ENCODE measurements at regions of chr12 and their contacts with region 1.

Region 1: GRCh38 chr12:6851921-6852650 is at the start of gene USP5:
- DNase-seq: peak; percentile 94

Region 2: GRCh38 chr12:6723607-6724396 is 128.3 kb before region 1 on chr12 and contains the start of gene COPS7A:
- CTCF ChIA-PET with region 1: no interaction called
- POLR2A ChIA-PET with region 1: interaction called, 34 read pairs
- DNase-seq: peak; percentile 95

Region 3: GRCh38 chr12:6825398-6826124 is 26.5 kb before region 1 on chr12:
- CTCF ChIA-PET with region 1: interaction called, 4 read pairs
- POLR2A ChIA-PET with region 1: interaction called, 49 read pairs
- DNase-seq: peak; percentile 85

Region 4: DNA sequence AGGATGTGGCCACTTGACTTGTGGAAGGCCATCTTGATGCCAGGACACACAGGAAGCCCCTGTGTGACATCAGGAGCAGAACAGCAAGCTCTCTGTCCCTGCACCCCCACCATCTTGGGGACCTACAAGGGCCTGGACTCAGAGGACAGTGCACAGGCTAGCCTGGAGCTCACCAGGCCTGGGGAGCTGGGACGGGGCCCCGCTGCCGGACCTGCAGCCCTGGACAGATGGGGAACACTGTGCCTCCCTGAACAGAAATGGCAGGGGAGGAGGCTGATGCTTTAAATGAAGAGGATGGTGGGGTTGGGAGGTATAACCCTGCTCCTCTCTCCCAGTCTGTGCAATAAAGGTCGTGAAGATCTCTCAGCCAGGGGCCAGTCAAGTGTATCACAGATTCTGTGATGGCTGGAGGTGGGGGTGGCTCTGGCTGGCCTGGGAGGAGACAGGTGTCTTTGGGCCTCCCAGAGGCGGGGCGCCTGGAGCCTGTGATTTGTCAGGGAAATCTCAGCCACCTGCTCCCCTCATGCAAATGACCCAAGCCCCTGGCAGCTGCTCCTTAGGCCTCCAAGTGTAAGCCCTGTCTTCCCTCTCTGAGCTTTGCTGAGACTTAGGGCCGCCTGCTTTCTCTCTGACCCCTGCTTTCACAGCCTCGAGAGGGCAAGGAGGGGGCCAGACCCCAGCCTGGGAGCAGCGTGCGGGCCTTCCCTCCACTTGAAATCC is 12.4 kb before region 1 on chr12:
- CTCF ChIA-PET with region 1: interaction called, 14 read pairs
- POLR2A ChIA-PET with region 1: interaction called, 57 read pairs
- DNase-seq: no peak

Region 5: DNA sequence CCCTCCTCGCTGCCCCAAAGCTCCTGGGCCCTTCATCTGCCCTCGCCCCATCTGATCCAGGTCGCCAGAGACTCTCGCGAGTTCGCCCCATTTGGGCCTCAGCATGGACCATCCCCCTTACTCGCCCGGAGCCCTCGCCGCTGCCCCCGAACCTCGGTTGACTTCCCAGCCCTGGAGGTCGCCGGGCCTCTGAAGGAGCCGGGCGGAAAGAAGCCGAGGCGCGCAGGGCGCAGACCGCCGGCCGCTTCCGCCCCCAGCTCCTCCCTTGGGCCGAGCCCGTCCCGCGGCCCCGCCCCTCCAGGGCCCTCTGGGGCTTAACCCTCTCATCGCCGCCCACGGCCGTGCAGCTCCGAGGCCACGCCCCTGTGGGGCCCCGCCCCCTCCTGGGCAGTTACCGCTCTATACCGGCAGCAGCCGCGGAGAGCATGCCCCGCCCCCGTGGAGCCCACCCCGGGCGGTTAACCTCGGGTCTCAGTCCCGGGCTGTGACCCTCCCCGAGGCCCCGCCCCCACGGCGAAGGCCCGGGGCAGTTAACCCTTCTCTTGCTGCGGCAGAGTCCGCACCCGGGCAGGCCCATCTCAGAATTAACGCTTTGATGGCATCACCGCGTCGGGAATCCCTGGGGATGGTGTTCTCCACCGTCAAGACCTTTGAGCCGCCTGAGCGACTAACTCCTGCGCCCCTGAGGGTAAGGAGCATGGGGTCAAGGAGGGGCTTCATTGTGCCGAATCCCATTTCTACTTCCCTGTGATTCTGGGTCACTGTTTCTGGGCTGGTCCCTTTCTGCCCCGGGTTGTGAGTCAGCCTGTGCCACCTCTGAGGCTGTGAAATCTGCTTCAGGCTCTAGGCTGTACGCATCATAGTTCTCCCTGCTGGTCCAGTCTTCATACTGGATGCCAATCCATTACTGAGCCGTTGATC is 21.3 kb after region 1 on chr12 and contains the start of gene SPSB2:
- CTCF ChIA-PET with region 1: interaction called, 28 read pairs
- POLR2A ChIA-PET with region 1: interaction called, 214 read pairs
- DNase-seq: peak; percentile 96

Region 6: DNA sequence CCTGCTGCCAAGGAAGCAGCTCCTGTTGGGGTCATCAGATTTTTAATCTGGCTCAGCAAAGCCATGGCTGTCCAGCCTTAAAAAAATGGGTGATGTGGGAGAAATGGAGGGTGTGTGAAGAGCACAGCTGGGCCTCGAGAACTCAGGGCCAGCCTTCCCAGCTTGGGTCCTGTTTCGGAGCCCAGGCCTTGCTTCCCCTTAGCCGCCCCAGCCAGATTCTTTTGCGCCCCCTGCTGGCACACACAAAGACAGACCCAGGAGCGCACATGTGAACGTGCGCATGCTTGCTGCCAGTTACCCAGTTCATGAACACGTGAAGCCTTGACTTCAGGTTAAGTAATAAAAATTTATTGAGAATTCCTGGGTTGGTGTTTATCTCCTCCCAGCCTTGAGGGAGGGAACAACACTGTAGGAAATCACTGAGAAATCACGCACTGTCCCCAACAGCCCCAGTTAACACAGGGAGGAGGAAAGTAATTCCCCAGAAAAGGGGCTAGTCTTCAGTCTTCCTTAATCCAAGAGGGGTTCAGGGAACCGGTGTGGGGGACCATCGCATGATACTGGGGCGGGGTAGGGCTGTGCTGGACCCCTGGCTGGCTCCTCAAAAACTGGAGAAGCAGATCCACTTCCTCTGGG is 113.1 kb after region 1 on chr12:
- CTCF ChIA-PET with region 1: no interaction called
- POLR2A ChIA-PET with region 1: interaction called, 15 read pairs
- DNase-seq: peak; percentile 81

Measured in HEK293T (cell line).